BJ (cell line): ENCODE measurements at regions of chr2 and their contacts with region 1.

Region 1: GRCh38 chr2:208040199-208041171 is 15.2 kb upstream of the PLEKHM3 start:
- DNase-seq: no peak
- H3K4me3 ChIP-seq: no peak overlapping the region
- H3K27me3 ChIP-seq: no peaks in the 10 kb centered on the region
- CTCF ChIP-seq: peak; percentile 82

Region 2: DNA sequence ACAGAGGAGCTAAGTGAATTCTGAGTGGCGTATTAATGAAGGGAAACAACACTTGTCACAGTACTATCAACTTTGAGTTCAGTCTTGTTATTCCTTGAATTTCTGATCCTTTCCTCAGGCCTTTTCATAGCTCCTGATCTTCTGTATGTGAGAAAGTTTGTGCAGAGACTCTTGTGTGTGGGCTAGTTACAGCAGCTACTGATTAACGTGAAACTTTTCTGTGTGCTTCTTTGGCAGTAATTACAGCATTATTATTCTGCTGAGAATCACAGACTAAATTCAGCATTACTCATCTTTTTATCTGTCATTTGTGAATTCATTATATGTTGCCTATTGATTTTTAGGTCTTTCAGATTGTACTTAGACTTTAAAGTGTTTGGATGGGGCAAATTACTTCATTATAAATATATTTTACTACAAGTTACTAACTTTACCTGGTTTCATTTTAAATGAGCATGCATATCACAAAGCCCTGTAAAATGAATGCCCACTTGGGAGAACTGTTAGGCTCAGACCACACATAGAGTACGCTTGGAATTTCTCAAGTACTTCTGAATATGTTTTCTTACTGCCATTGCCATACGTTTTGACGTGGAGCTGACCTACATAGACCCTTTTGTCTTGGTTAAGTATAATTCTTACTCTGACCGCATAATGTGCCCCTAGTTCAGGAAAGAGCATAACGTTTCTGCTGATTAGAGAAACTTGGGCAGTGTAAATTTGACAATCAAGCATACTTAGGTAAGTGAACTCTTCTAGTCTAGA is 474.6 kb before region 1 on chr2:
- CTCF ChIA-PET with region 1: no interaction called
- POLR2A ChIA-PET with region 1: no interaction called
- DNase-seq: no peak
- H3K4me3 ChIP-seq: no peak overlapping the region
- H3K27me3 ChIP-seq: no peaks in the 10 kb centered on the region
- CTCF ChIP-seq: no peak

Region 3: GRCh38 chr2:207746131-207746530 is 294.4 kb before region 1 on chr2:
- CTCF ChIA-PET with region 1: interaction called, 136 read pairs
- POLR2A ChIA-PET with region 1: no interaction called
- DNase-seq: no peak
- H3K4me3 ChIP-seq: no peak overlapping the region
- H3K27me3 ChIP-seq: no peaks in the 10 kb centered on the region
- CTCF ChIP-seq: peak; percentile 93

Region 4: GRCh38 chr2:207974216-207974605 is 66.3 kb before region 1 on chr2:
- CTCF ChIA-PET with region 1: interaction called, 21 read pairs
- POLR2A ChIA-PET with region 1: no interaction called
- DNase-seq: no peak
- H3K4me3 ChIP-seq: no peak overlapping the region
- H3K27me3 ChIP-seq: no peaks in the 10 kb centered on the region
- CTCF ChIP-seq: no peak

Region 5: DNA sequence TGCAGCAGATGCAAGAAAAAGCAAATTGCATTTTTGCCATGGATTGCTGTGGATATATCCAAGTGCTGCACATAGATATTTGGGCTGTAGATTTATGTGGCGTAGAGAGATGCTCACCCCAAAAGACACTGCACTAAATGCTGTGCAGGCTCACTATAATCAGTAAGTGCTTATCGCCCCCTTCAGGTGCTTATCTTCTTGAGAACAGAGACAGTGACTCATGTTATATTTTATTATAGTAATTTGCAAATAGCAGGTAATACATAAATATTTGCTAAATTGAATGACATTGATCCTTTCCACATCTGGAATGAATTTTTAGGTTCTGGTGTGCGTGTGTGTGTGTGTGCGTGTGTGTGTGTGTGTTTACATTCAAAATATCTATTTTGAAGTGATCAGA is 21.6 kb after region 1 on chr2:
- CTCF ChIA-PET with region 1: interaction called, 10 read pairs
- POLR2A ChIA-PET with region 1: no interaction called
- DNase-seq: no peak
- H3K4me3 ChIP-seq: no peak overlapping the region
- H3K27me3 ChIP-seq: no peaks in the 10 kb centered on the region; the same call in 1 of the 2 replicates
- CTCF ChIP-seq: peak; percentile 49